ENCODE measurements at regions of chr7 and their contacts with region 1.

Region 1: DNA sequence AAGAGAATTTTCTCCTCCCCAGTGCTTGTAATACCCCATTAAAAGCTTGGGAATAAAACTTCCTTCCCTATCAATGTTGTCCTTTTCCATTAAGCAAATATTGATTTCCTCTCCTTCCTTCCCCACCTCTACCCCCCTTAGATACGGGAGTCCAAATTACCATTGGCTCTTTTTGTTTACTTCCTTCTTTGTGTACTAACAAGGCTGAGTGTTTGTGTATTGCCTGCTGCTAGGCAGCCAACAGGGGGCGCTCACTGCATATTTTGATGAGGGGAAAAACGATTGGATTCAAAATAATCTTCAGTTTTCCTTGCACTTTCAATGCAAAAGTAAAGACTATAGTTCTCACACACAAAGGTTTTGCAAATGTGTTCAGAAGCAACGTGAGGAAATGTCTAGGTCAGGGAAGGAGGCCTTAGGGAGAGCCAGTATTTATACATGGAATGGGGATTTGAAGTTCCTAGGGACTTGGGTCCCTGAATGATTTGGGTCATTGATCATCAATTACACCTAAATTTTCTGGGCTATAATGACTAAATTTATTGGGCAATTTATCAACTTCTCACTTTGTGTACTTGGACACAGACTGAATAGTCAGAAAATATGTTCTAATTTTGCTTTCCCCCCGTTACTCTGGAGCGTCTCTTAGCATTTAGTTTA is 23.6 kb upstream of the VPS41 start:
- DNase-seq: peak; percentile 74
- ATAC-seq: no peak

Region 2: GRCh38 chr7:39252916-39253315 is 320.3 kb after region 1 on chr7:
- intact Hi-C with region 1: no loop called
- DNase-seq: no peak
- ATAC-seq: no peak

Region 3: DNA sequence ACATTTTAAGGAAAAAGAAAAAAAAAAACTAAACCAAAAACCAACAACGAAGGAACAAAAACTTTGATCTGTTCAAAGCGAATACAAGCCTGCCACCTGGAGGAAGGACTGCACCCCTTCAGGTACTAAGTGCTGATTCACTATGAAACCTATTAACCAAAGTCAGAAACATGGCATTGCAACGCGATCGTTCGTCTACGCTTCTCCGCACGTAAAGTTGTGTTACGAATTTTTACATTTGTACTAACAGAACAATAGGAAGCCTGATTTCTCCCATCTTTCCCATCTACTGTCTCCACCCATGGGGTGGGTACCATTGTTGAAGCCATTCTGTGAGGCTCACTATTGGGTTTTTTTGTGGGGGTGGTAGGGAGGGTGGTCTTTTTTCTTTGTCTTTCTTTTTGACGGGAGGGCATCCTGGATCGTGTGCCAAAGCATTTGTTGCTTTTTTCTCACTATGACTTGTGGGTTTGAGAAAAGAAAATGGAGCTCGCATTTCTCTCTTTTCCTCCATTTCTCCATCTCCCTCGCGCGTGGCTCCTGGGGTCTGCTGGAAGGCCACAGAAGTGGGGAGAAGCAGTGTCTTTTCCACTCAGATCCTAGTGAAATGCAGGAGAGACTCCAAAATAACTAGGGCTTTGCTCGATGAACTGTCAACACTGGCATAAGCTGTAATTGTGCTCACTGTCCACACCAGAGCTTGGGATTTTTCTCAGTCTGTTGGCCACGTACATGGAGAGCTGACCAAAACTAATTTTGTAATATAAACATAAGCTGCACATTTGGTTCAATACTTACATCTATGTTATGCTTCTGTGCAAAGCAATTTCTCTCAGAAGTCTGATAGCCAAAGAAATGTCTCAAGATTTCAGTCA is 532.7 kb after region 1 on chr7:
- intact Hi-C with region 1: loop called (anchors 5 kb)
- DNase-seq: no peak
- ATAC-seq: peak; percentile 68

Measured in left ventricle myocardium superior (tissue), 1 donor.